BJ (cell line): ENCODE measurements at regions of chr6 and their contacts with region 1.

Region 1: DNA sequence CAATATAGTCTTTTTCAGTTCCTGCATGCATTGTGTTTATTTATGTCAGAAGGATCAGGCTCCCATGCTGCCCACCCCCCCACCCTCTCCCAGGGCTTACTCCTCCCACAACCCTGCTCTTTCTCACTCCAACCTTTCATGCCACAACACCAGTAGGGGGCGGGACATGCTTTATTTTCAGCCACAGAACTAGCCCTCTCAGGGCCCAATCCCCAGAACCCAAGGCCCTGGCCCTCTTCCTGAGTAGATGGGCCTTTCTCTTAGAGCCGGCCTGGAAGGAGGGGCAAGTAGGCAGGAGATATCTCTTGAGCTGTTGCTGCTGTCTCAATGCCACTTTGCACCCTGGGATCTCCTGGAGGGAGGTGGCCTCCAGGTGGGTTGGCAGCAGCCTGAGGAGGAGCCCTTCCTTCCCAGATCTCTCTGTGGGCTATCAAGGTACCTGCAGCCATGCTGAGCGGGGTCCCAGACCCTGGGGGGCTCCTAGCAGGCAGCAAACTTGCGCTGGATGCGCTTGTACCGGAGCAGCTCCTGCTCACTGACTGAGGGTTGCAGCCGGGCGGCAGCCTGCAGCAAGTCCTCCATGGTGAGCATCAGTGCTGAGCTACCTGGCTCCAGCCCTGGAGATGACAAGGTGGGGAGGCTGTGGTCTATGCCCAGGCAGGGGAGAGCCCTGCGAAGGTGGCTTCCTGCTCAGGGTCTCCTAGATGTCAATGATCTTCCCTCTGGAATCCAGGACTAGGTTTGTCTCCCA is 3.5 kb downstream of the GNMT start:
- DNase-seq: no peak
- H3K4me3 ChIP-seq: no peak overlapping the region
- H3K27me3 ChIP-seq: no peaks in the 10 kb centered on the region
- CTCF ChIP-seq: peak; percentile 45

Region 2: GRCh38 chr6:42978839-42979522 is 15.0 kb after region 1 on chr6 and contains the start of gene PEX6:
- CTCF ChIA-PET with region 1: interaction called, 12 read pairs
- POLR2A ChIA-PET with region 1: no interaction called
- DNase-seq: no peak
- H3K4me3 ChIP-seq: peak within 1 kb of the TSS; percentile 72
- H3K27me3 ChIP-seq: no peaks in the 10 kb centered on the region
- CTCF ChIP-seq: no peak
- polyA plus RNA-seq, gene PEX6: 2.8 and 5.6 TPM in 2 replicates